Heart right ventricle (tissue), 16 donors: ENCODE measurements at regions of chr12 and their contacts with region 1.

Region 1: DNA sequence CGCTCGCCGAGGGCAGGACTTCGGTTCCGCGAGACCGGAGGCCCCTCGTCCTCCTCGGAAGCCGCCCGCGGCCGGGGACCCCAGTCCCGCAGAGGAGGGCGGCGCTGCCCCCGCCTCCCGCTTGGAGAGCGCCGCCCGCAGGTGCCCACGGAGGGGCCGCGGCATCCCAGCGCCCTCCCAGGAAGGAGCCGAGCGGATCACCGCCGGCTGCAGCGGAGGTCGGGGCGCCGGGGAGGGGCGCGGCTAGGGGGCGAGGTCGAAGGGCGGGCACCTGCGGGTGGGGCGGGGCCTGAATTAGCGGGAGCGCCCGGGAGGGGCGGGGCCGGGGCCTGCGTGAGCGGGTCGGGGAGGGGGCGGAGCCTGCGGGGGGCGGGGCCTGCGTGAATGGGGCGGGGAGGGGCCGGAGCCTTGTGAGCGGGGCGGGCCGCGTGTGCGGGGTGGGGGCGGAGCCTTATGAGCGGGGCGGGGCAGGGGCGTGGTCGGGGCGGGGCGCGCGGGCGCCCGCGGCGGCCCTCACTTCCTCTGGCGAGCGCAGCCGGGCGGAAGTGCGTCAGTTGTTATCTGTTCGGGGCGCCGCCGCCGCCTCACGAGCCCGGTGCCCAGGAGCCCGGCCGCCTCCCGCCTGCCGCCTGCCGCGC is at the start of gene FBRSL1:
- DNase-seq: peak; percentile 89 to 92
- ATAC-seq: peak; percentile 76 to 89 (median 82)
- H3K4me3 ChIP-seq: peak within 1 kb of the TSS; percentile 65 to 93 (median 80)
- H3K27ac ChIP-seq: peak within 1 kb of the TSS; percentile 33 to 96 (median 90)
- H3K4me1 ChIP-seq: peaks cover 29 to 57% (median 55%) of the 10 kb centered on the region in 9 donors
- H3K27me3 ChIP-seq: no peaks in the 10 kb centered on the region
- CTCF ChIP-seq: peak in 2 of 9 donors; percentile 9 to 14
- total RNA-seq, gene FBRSL1: 42.3 to 90.6 (median 48.0) TPM

Region 2: GRCh38 chr12:132205271-132206045 is 284.3 kb before region 1 on chr12:
- intact Hi-C with region 1: no loop called
- DNase-seq: no peak
- ATAC-seq: peak in 2 of 8 donors; percentile 15 to 20
- H3K4me3 ChIP-seq: peak overlapping the region in 4 of 10 donors; percentile 1 to 36 (median 16)
- H3K27ac ChIP-seq: no peak overlapping the region
- H3K4me1 ChIP-seq: peaks cover 0 to 9% (median 7%) of the 10 kb centered on the region in 9 donors
- H3K27me3 ChIP-seq: peaks cover 12 to 79% (median 61%) of the 10 kb centered on the region in 7 donors
- CTCF ChIP-seq: no peak

Region 3: DNA sequence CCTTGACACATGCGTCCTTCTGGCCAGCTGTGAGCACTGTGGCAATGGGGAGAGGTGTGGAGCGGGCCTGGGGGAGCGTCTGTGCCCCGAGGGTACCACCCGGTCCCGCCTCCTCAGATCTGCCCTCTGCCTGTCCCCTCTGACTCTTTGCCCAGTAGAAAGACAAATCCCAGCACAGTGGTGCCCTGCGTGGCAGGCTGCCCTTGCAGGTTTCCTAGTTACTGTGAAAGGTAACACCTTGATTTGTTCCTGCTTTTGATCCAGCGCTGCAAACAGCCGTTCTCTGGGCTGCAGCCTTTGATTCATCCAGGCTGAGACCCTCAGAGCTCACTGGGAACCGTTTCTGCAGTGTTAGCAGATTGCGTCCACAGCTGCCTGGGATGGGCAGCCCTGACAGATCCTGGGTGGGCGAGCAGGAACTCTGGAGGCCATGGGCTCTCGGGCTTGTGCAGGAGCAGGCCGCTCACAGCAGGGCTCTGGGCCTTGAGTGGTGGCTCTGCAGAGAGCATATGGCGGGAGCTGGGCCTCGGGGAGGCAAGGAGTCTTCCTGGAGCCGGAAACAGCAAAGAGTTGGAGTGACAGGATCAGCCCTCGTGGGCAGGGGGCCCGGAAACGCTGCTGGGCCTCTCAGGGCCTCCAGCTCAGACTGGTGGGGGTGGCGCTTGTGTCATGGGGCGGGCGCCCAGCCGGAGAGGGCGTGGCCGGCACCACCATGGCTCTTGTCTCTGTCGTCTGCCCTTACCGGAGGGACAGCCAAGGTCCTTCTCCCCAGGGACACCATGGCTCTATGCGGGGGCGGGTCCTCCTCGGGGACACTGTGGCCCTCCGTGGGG is 16.8 kb after region 1 on chr12:
- intact Hi-C with region 1: loop called in 1 of 10 experiments (anchors 2 kb)
- DNase-seq: peak; percentile 90 to 91
- ATAC-seq: peak; percentile 85 to 95 (median 93)
- H3K4me3 ChIP-seq: peak overlapping the region in 8 of 10 donors; percentile 8 to 43 (median 32)
- H3K27ac ChIP-seq: peak overlapping the region; percentile 72 to 90 (median 81)
- H3K4me1 ChIP-seq: peaks cover 44 to 70% (median 60%) of the 10 kb centered on the region in 9 donors
- H3K27me3 ChIP-seq: no peaks in the 10 kb centered on the region
- CTCF ChIP-seq: no peak

Region 4: DNA sequence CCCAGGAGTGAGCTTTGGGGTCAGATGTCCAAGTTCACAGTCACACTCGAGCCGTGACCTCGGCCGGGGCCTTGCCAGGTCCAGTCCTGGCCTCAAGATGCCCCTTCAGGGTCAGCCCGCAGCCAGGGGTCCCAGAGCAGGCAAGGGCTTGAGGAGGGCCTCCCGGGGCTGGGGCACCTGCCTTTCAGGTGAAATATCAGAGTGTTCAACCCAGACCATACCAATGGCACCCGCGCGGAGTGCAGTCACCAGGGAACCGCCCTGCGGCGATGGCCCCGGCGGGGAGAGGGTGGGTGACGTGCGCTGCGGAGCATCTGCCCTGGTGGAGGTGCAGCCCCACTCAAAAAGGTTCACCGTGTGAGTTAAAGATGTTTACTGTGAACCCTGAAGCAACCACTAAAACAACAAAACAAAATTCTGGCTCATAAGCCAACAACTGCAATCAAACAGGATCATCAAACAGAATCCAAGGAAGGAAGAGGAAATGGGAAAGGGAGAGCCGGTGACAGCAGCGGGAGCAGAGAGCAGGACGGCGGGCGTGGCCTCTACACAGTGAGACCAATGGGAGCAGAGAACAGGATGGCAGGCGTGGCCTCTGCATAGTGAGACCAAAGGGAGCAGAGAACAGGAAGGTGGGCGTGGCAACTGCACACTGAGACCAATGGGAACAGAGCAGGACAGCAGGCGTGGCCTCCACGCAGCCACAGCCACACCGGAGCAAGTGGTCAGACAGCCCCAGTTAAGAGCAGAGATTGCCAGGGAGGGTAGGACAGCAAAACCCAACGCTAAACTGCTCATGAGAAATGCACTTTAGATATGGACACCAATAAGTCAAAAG is 104.0 kb after region 1 on chr12:
- intact Hi-C with region 1: loop called in 1 of 10 experiments (anchors 10 kb)
- DNase-seq: peak; percentile 91
- ATAC-seq: peak; percentile 94 to 99 (median 98)
- H3K4me3 ChIP-seq: peak overlapping the region in 4 of 10 donors; percentile 2 to 47 (median 24)
- H3K27ac ChIP-seq: no peak overlapping the region
- H3K4me1 ChIP-seq: peaks cover 0 to 21% (median 2%) of the 10 kb centered on the region in 9 donors
- H3K27me3 ChIP-seq: peaks cover 0 to 18% (median 0%) of the 10 kb centered on the region in 7 donors
- CTCF ChIP-seq: no peak

Region 5: DNA sequence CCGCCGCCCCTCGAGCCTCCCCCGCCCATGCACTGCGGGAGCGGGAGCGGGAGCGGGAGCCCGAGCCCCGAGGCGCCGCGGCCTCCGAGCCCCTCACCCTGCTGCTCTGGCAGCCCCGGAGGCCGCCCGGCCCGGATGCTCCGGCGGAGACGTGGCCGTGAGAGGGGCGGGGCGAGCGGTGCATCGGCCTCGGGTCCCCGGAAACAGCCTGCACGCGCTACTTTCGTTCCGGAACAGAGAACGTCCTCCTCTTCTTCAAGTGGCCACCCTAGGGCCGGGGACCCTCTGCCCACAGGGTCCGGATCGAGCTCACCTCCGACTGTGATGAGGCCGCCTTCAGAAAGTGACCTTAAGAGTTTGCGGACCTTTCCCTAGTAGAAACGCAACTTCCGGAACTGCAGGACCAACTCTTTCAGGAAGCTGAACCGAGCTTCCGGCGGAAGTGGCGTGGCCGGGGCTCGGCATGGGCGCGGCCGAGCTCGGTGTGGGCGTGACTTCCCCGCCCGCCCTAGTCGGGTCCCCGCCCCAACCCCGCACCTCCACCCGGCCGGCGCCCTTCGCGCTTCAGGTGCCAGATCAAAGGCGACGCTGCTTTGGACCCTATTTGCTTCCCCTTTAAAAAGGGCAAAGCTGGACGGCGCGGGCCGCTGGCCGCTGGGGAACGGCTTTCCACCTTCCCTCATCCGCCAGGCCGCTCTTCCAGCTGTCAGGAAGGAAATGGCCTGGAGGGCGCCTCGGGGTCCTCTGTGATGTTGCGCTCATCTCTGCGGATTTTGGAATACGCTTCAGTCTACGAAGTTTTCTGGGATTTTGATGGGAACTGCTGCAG is 339.2 kb after region 1 on chr12 and contains the start of gene GOLGA3:
- intact Hi-C with region 1: loop called in 1 of 10 experiments (anchors 5 kb)
- DNase-seq: peak; percentile 93 to 94
- ATAC-seq: peak; percentile 96 to 99 (median 98)
- H3K4me3 ChIP-seq: peak within 1 kb of the TSS; percentile 34 to 98 (median 80)
- H3K27ac ChIP-seq: peak within 1 kb of the TSS; percentile 91 to 99 (median 96)
- H3K4me1 ChIP-seq: peaks cover 0 to 29% (median 22%) of the 10 kb centered on the region in 9 donors
- H3K27me3 ChIP-seq: no peaks in the 10 kb centered on the region
- CTCF ChIP-seq: no peak
- total RNA-seq, gene GOLGA3: 27.7 to 46.1 (median 35.7) TPM